PC-3 (cell line): ENCODE measurements at regions of chr7 and their contacts with region 1.

Region 1: GRCh38 chr7:16571941-16572340 is 45.3 kb downstream of the LRRC72 start:
- DNase-seq: no peak
- ATAC-seq: no peak
- H3K4me3 ChIP-seq: no peak overlapping the region
- H3K27ac ChIP-seq: no peak overlapping the region
- H3K4me1 ChIP-seq: no peaks in the 10 kb centered on the region
- H3K27me3 ChIP-seq: no peaks in the 10 kb centered on the region
- CTCF ChIP-seq: no peak

Region 2: GRCh38 chr7:16594061-16594460 is 22.1 kb after region 1 on chr7:
- CTCF ChIA-PET with region 1: no interaction called
- POLR2A ChIA-PET with region 1: no interaction called
- intact Hi-C with region 1: loop called (anchors 1 kb)
- DNase-seq: peak; percentile 46
- ATAC-seq: peak; percentile 84
- H3K4me3 ChIP-seq: no peak overlapping the region
- H3K27ac ChIP-seq: no peak overlapping the region
- H3K4me1 ChIP-seq: peaks cover 4% of the 10 kb centered on the region; the same call in 1 of the 2 replicates
- H3K27me3 ChIP-seq: no peaks in the 10 kb centered on the region
- CTCF ChIP-seq: no peak

Region 3: DNA sequence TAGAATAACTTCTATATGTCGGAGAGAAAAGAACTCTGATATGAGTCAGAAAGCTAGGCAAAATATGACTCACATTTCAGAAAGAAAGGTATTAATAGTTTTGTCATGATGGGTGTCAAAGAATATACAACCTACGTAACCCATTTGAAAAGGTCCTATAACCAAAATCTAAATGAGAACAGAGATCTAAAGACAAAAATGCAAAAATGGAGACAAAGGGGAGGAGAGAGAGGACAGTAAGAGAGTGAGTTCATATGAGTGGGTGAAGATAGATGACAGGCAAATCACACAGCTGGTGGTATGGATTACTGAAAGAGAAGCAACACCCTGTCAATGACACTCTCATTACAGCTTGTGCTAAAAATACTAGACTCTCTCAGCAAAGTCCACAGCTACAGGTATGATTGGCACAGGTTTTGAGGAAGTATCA is 48.1 kb after region 1 on chr7:
- CTCF ChIA-PET with region 1: no interaction called
- POLR2A ChIA-PET with region 1: no interaction called
- intact Hi-C with region 1: no loop called
- DNase-seq: peak; percentile 9
- ATAC-seq: no peak
- H3K4me3 ChIP-seq: no peak overlapping the region
- H3K27ac ChIP-seq: no peak overlapping the region
- H3K4me1 ChIP-seq: no peaks in the 10 kb centered on the region
- H3K27me3 ChIP-seq: no peaks in the 10 kb centered on the region
- CTCF ChIP-seq: no peak

Region 4: DNA sequence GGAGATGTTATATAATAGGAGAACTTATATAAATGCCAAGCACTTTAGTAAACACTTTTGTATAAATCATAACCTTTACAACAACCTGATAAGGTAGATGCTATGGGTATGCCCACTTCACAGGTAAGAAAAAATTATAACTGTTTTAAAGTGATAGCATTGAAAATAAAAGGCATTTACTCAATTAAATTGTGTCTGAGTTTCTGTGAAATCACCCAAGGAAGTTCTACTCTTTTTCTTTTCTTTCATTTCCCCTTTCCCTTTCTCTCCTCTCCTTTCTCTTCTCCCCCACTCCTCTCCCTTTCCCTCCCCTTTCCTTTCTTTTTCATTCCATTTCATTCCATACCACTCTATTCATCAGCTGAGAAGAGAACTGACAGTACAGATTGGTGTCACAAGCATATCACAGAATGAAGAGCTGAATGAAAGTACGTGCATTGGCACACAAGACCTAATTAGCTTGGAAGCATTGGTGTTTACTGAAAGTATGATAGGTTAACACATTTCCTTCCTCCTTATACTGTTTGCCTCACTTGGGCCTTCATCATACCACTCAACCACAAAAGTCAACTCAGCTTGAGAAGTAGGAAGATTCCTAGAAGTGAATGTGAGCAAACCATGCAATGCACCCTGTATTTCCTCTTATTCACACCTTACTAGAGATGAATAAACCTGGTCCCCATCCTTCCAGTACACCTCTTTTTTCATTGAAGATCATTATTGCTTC is 427.8 kb after region 1 on chr7:
- CTCF ChIA-PET with region 1: no interaction called
- POLR2A ChIA-PET with region 1: no interaction called
- intact Hi-C with region 1: no loop called
- DNase-seq: no peak
- ATAC-seq: no peak
- H3K4me3 ChIP-seq: no peak overlapping the region
- H3K27ac ChIP-seq: no peak overlapping the region
- H3K4me1 ChIP-seq: no peaks in the 10 kb centered on the region
- H3K27me3 ChIP-seq: no peaks in the 10 kb centered on the region
- CTCF ChIP-seq: no peak